B cell (primary cell): ENCODE measurements at regions of chr10 and their contacts with region 1.

Region 1: DNA sequence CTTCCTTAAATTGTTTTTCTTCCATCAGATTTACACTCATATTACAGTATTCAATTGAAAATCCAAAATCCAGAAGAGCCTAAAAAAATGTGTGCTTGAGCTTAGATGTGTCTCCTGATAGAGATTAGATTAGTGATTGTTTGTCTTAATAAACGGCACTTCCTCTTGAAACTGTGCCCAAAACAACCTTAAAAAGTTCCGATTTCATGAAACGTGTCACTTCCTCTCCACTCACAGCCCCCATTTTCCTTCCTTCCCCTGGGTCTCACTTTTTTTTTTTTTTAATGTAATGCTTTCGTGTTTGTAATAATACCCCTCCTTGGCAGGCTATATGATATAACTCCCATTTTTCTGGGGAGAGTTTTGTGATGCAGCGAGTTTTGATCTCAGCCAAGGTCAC is 114.8 kb upstream of the ADO start:
- DNase-seq: peak; percentile 73
- ATAC-seq: peak; percentile 73
- H3K4me3 ChIP-seq: peak overlapping the region in 2 of 5 experiments; percentile 22
- H3K4me3 Mint-ChIP-seq: peak overlapping the region; percentile 80
- H3K27ac ChIP-seq: peak overlapping the region; percentile 4 to 66
- H3K27ac Mint-ChIP-seq: peak overlapping the region; percentile 83
- H3K4me1 ChIP-seq: peaks cover 35 to 37% of the 10 kb centered on the region in 2 donors
- H3K4me1 Mint-ChIP-seq: peaks cover 36% of the 10 kb centered on the region
- H3K27me3 ChIP-seq: no peaks in the 10 kb centered on the region
- H3K27me3 Mint-ChIP-seq: no peaks in the 10 kb centered on the region
- CTCF ChIP-seq: no peak

Region 2: GRCh38 chr10:62742536-62743061 is 52.9 kb after region 1 on chr10:
- CTCF ChIA-PET with region 1: no interaction called
- POLR2A ChIA-PET with region 1: no interaction called
- intact Hi-C with region 1: no loop called
- DNase-seq: peak; percentile 65
- ATAC-seq: peak; percentile 78
- H3K4me3 ChIP-seq: no peak overlapping the region
- H3K4me3 Mint-ChIP-seq: peak overlapping the region; percentile 69
- H3K27ac ChIP-seq: no peak overlapping the region
- H3K27ac Mint-ChIP-seq: peak overlapping the region; percentile 80
- H3K4me1 ChIP-seq: peaks cover 13% of the 10 kb centered on the region in 2 donors
- H3K4me1 Mint-ChIP-seq: peaks cover 14% of the 10 kb centered on the region
- H3K27me3 ChIP-seq: no peaks in the 10 kb centered on the region
- H3K27me3 Mint-ChIP-seq: no peaks in the 10 kb centered on the region
- CTCF ChIP-seq: no peak

Region 3: GRCh38 chr10:62804356-62805230 is 114.9 kb after region 1 on chr10 and contains the start of gene ADO:
- CTCF ChIA-PET with region 1: no interaction called
- POLR2A ChIA-PET with region 1: no interaction called
- intact Hi-C with region 1: loop called (anchors 2 kb)
- DNase-seq: peak; percentile 92
- ATAC-seq: peak; percentile 87
- H3K4me3 ChIP-seq: peak within 1 kb of the TSS; percentile 79 to 99 (median 92)
- H3K4me3 Mint-ChIP-seq: peak within 1 kb of the TSS; percentile 98
- H3K27ac ChIP-seq: peak within 1 kb of the TSS; percentile 96 to 98
- H3K27ac Mint-ChIP-seq: peak within 1 kb of the TSS; percentile 99
- H3K4me1 ChIP-seq: peaks cover 26 to 29% of the 10 kb centered on the region in 2 donors
- H3K4me1 Mint-ChIP-seq: peaks cover 44% of the 10 kb centered on the region
- H3K27me3 ChIP-seq: no peaks in the 10 kb centered on the region
- H3K27me3 Mint-ChIP-seq: no peaks in the 10 kb centered on the region
- CTCF ChIP-seq: no peak
- total RNA-seq, gene ADO: 18.4 and 19.1 TPM in 2 replicates